Activated CD4-positive, alpha-beta T cell treated with anti-CD3 and anti-CD28 coated beads for 36 hours (primary cell): ENCODE measurements at regions of chr11 and their contacts with region 1.

Region 1: DNA sequence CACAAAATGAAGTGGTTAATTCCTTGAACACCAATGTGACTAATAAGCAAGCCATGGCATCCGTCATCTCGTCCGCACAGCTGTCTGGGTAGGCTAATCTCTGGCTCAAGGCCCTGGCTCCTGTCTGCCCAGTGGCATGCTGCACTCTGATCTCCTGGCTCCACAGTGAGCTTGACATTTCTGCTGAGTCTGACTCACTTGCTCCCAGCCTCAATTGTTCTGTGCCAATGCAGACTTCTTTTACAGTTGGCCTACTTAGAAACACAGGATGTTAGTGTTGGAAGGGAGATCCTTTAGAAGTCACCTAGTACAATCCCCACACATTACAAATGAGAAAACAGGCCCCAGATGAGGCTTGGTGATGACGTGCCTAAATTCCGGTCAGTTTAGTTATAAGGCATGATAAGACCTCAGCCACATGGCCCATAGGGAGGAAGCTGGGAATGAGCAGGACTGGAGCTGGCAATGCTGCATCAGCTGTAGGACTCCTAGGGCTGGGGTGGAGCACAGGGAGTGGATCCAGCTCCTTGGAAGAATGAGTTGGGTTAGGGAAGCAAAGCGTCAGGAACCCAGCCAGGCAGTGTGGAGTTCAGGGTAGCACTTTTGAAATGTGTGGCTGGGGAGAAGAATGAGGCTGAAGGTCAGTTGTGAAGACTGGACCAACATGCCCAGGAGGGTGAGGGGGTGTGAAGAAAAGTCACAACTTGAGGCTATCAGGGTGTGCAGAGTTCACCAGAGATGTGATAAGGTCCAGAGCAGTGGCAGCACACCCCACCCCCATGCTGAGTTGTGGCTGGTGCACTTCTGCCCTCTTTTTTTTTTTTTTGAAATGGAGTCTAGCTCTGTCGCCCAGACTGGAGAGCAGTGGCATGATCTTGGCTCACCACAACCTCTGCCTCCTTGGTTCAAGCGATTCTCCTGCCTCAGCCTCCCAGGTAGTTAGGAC is 70.2 kb upstream of the EED start:
- DNase-seq: peak; percentile 30
- ATAC-seq: peak; percentile 18
- H3K4me3 Mint-ChIP-seq: no peak overlapping the region
- H3K27ac Mint-ChIP-seq: no peak overlapping the region
- H3K4me1 Mint-ChIP-seq: peaks cover 31% of the 10 kb centered on the region
- H3K27me3 Mint-ChIP-seq: no peaks in the 10 kb centered on the region

Region 2: DNA sequence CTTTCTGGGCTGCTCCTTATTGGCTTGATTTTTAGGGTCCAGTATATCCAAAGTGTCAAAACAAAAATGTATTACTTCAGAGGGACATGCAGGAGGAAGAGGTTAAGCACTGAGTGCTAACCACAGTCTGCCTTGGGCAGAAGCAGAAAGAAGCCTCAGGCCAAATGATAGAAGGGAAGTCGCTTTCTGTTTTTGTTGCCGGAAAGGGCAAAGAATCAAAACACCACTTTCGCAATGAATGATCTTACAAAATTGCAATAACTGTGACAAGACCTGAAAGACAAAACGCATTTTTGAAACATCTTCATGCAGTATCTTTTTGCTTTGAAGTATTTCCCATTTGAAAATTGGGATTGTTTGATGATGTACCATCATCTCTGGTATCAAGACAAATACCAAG is 35.4 kb before region 1 on chr11:
- CTCF ChIA-PET with region 1: no interaction called
- POLR2A ChIA-PET with region 1: no interaction called
- intact Hi-C with region 1: loop called in 1 of 2 experiments (anchors 5 kb)
- DNase-seq: peak; percentile 41
- ATAC-seq: peak; percentile 81
- H3K4me3 Mint-ChIP-seq: no peak overlapping the region
- H3K27ac Mint-ChIP-seq: peak overlapping the region; percentile 55
- H3K4me1 Mint-ChIP-seq: peaks cover 31% of the 10 kb centered on the region
- H3K27me3 Mint-ChIP-seq: no peaks in the 10 kb centered on the region

Region 3: GRCh38 chr11:86274503-86274902 is 100.1 kb after region 1 on chr11:
- CTCF ChIA-PET with region 1: no interaction called
- POLR2A ChIA-PET with region 1: no interaction called
- intact Hi-C with region 1: no loop called
- DNase-seq: no peak
- ATAC-seq: no peak
- H3K4me3 Mint-ChIP-seq: no peak overlapping the region
- H3K27ac Mint-ChIP-seq: peak overlapping the region; percentile 38
- H3K4me1 Mint-ChIP-seq: peaks cover 57% of the 10 kb centered on the region
- H3K27me3 Mint-ChIP-seq: no peaks in the 10 kb centered on the region